ENCODE measurements at regions of chr1 and their contacts with region 1.

Region 1: GRCh38 chr1:232950197-232951176 is at the start of gene NTPCR:
- DNase-seq: peak; percentile 98
- ATAC-seq: peak; percentile 91
- H3K4me3 Mint-ChIP-seq: peak within 1 kb of the TSS; percentile 90
- H3K27ac Mint-ChIP-seq: peak within 1 kb of the TSS; percentile 95
- H3K4me1 Mint-ChIP-seq: peaks cover 35% of the 10 kb centered on the region
- H3K27me3 Mint-ChIP-seq: no peaks in the 10 kb centered on the region
- total RNA-seq, gene NTPCR: 37.4 to 51.9 TPM

Region 2: DNA sequence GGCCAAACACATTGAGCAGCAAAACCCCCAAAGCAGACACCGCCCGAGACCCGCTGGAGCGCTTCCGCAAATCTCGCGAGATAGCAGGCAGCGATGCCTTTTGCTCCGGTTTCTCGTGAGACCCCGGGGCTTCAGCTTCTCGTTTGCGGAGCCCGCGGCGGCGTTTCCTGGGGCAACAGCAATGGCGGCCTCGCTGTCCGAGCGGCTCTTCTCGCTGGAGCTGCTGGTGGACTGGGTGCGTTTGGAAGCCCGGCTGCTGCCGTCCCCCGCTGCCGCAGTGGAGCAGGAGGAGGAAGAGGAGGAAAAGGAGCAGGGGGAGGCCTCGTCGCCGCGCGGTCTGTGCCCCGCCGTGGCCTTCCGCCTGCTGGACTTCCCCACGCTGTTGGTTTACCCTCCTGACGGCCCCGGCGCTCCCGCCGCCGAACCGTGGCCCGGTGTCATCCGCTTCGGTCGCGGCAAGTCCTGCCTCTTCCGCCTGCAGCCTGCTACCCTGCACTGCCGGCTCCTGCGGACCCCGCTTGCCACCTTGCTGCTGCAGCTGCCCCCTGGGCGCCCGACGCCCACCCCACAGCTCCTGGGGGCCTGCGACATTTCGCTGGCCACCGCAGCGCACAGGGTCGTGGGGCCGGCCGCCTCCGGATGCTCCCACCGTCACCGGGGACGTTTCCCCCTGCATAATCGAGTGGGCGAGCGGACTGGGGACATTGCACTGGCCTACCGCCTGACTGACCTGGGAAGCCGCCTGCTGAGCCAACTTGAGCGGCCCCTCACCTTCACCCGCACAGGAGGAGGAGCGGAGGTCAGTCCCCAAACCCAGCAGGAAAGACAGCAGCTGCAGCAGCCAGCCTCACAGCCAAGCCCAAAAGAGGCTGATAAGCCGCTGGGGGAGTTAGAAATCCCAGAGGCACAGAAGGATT is 145.0 kb before region 1 on chr1 and contains the start of gene MAP10:
- CTCF ChIA-PET with region 1: interaction called, 3 read pairs
- POLR2A ChIA-PET with region 1: no interaction called
- intact Hi-C with region 1: loop called (anchors 1 to 10 kb)
- DNase-seq: peak; percentile 89
- ATAC-seq: peak; percentile 92
- H3K4me3 Mint-ChIP-seq: peak within 1 kb of the TSS; percentile 79
- H3K27ac Mint-ChIP-seq: peak within 1 kb of the TSS; percentile 86
- H3K4me1 Mint-ChIP-seq: peaks cover 23% of the 10 kb centered on the region
- H3K27me3 Mint-ChIP-seq: peaks cover 3% of the 10 kb centered on the region
- total RNA-seq, gene MAP10: 1.4 to 1.5 TPM

Region 3: GRCh38 chr1:232923739-232924386 is 26.6 kb before region 1 on chr1:
- CTCF ChIA-PET with region 1: interaction called, 4 read pairs
- POLR2A ChIA-PET with region 1: no interaction called
- intact Hi-C with region 1: loop called in 1 of 2 experiments (anchors 2 kb)
- DNase-seq: peak; percentile 69
- ATAC-seq: peak; percentile 92
- H3K4me3 Mint-ChIP-seq: peak overlapping the region; percentile 3
- H3K27ac Mint-ChIP-seq: peak overlapping the region; percentile 80
- H3K4me1 Mint-ChIP-seq: peaks cover 61% of the 10 kb centered on the region
- H3K27me3 Mint-ChIP-seq: no peaks in the 10 kb centered on the region

Region 4: DNA sequence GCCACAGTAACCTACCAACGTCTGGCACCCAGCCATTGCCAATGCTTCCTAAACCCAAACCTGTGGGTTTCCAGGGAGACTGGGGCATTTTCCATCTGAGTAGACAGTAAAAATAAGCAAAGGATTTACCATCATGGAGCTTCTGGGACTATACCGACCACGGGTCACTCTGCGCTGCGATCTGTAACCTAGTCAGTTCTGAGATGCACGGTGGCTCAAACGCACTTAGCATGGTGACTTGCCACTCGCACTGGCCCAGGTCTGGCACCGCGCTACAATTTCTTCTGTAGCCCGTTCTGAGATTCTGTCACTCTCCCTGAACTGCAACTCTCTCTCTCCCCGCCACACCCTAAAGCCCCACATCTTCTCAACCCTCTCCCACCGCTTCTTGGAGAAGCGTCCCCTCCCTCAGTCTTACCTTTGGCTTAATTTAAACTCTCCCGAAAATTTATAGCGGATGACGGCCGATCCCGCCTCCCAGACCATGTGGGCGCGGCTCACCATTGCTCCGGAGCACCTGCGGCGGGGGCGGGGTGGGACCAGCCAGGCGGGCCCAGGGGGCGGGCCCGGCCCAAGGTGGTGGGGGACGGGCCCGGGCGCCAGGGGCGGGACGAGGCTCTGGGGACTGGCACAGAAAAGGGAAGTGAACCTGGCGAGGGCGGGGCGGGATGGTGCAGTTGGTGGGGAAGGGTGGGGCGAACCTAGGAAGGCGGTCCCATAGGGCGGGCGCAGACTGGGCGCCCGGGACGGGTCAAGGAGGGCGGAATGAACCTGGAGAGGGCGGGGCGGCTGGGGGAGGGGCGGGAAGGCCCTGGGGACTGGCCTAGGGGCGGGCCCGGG is 376.5 kb after region 1 on chr1:
- CTCF ChIA-PET with region 1: no interaction called
- POLR2A ChIA-PET with region 1: no interaction called
- intact Hi-C with region 1: loop called in 1 of 2 experiments (anchors 1 kb)
- DNase-seq: peak; percentile 94
- ATAC-seq: peak; percentile 97
- H3K4me3 Mint-ChIP-seq: peak overlapping the region; percentile 69
- H3K27ac Mint-ChIP-seq: no peak overlapping the region
- H3K4me1 Mint-ChIP-seq: peaks cover 13% of the 10 kb centered on the region
- H3K27me3 Mint-ChIP-seq: peaks cover 13% of the 10 kb centered on the region

Region 5: GRCh38 chr1:233885196-233886028 is 934.9 kb after region 1 on chr1:
- CTCF ChIA-PET with region 1: no interaction called
- POLR2A ChIA-PET with region 1: no interaction called
- intact Hi-C with region 1: no loop called
- DNase-seq: no peak
- ATAC-seq: no peak
- H3K4me3 Mint-ChIP-seq: no peak overlapping the region
- H3K27ac Mint-ChIP-seq: no peak overlapping the region
- H3K4me1 Mint-ChIP-seq: no peaks in the 10 kb centered on the region
- H3K27me3 Mint-ChIP-seq: peaks cover 8% of the 10 kb centered on the region

Measured in activated CD4-positive, alpha-beta T cell treated with anti-CD3 and anti-CD28 coated beads for 36 hours (primary cell).